ENCODE measurements at regions of chr11 and their contacts with region 1.

Region 1: GRCh38 chr11:59053387-59053786 is 32.7 kb upstream of the GLYATL1B start:
- DNase-seq: peak; percentile 25
- H3K4me3 ChIP-seq: no peak overlapping the region
- H3K27ac ChIP-seq: no peak overlapping the region
- H3K4me1 ChIP-seq: no peaks in the 10 kb centered on the region
- H3K27me3 ChIP-seq: peaks cover 4% of the 10 kb centered on the region
- CTCF ChIP-seq: peak; percentile 66 to 73

Region 2: DNA sequence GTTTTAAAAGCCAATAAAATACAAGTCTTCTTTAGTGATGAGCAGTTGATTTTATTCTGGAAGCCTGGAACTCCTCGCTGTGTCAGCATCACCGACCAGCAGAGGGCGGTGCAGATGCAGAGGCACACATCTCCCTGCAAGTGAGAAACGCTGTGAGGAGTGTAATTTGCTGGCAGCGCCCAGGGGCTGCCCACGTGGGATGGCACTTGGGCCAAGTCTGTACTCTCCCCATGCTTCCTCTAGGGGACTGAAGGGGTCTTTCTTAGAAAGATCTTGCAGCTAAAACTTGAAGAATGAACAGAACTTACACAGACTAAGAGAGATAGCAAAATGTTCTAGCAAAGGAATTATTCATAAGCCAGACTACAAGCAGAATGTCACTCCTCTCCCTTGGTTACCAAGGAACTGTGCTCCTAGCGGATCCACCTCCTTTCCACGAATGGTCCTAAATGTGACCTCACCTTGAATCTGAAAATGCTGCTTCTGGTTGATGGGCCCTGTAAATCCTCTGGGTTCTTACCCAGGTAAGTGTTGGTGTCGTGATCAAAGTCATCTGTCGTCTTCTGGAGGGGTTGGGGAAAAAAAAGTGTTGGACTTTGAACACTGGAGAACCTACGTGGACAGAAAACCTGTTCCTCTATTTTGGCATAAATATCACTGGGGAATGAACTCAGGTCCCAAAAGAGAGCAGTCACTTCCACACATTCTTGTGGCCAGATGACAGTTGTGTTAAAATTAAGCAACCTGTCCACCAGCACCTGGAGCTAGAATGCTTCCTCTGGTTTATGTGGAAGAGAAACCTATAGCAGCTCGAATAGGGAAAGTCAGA is 399.1 kb before region 1 on chr11:
- CTCF ChIA-PET with region 1: interaction called, 5 read pairs
- dilution Hi-C with region 1: no loop called
- in situ Hi-C with region 1: no loop called
- intact Hi-C with region 1: loop called (anchors 1 kb)
- DNase-seq: peak; percentile 60
- H3K4me3 ChIP-seq: no peak overlapping the region
- H3K27ac ChIP-seq: no peak overlapping the region
- H3K4me1 ChIP-seq: peaks cover 16% of the 10 kb centered on the region
- H3K27me3 ChIP-seq: no peaks in the 10 kb centered on the region
- CTCF ChIP-seq: peak; percentile 91 to 97

Region 3: GRCh38 chr11:58905721-58906477 is 147.5 kb before region 1 on chr11:
- CTCF ChIA-PET with region 1: interaction called, 16 read pairs
- dilution Hi-C with region 1: no loop called
- in situ Hi-C with region 1: no loop called
- intact Hi-C with region 1: loop called (anchors 1 kb)
- DNase-seq: peak; percentile 93
- H3K4me3 ChIP-seq: peak overlapping the region in 2 of 3 experiments; percentile 66 to 81
- H3K27ac ChIP-seq: no peak overlapping the region
- H3K4me1 ChIP-seq: peaks cover 23% of the 10 kb centered on the region
- H3K27me3 ChIP-seq: no peaks in the 10 kb centered on the region
- CTCF ChIP-seq: peak; percentile 35 to 54

Region 4: GRCh38 chr11:58958500-58958899 is 94.9 kb before region 1 on chr11:
- CTCF ChIA-PET with region 1: interaction called, 4 read pairs
- dilution Hi-C with region 1: no loop called
- in situ Hi-C with region 1: no loop called
- intact Hi-C with region 1: loop called (anchors 1 kb)
- DNase-seq: no peak
- H3K4me3 ChIP-seq: no peak overlapping the region
- H3K27ac ChIP-seq: no peak overlapping the region
- H3K4me1 ChIP-seq: no peaks in the 10 kb centered on the region
- H3K27me3 ChIP-seq: peaks cover 3% of the 10 kb centered on the region
- CTCF ChIP-seq: peak; percentile 35 to 52

Region 5: DNA sequence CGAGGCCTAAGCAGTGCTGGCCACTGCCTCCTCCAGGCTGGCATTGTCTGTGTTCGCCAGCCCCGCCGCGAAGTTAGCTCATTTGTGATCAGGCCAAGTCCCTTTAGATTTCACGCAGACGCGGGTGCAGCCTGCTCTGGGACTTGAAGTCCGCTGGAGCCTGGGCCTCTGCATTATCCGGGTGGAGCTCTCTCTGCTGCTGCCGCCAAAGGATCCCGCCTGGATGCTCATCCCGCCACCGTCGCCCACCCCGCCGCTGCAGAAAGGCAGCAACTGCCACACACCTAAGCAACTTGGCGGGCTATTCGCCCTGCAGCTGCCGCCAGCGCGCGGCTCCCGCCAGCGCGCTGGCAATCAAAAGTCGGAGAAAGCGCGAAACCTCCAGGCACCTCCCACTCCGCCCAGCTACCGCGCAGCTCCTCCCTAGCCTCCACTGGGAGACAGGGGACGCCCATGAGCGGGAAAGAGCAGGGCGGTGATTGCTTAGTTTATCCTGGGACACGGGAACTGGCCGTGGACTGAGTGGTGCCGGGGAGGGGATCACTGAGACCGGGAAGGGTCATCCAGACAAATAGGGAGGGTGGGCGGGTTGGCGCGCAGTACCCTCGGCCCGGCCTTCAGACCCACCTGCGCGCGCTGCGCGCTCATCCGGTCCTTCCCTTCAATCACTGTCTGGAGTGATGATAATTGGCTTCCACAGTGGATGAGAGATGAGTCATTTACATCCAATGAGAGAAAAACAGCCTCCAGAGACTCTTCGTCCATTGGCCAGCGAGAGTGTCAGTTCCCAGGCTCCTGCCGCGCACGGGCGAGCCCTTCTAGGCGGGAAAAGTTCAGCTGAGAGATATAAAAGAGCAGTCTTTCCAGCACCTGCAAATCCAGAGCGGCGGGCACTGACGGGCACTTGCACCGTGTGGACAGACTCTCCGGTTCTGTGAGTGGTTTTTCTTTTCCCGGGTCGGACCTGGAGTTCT is 53.3 kb after region 1 on chr11 and contains the start of gene FAM111B:
- CTCF ChIA-PET with region 1: no interaction called
- dilution Hi-C with region 1: no loop called
- in situ Hi-C with region 1: no loop called
- intact Hi-C with region 1: loop called (anchors 1 kb)
- DNase-seq: peak; percentile 97
- H3K4me3 ChIP-seq: peak within 1 kb of the TSS; percentile 55 to 60 (median 60)
- H3K27ac ChIP-seq: peak within 1 kb of the TSS; percentile 5
- H3K4me1 ChIP-seq: peaks cover 9% of the 10 kb centered on the region
- H3K27me3 ChIP-seq: no peaks in the 10 kb centered on the region
- CTCF ChIP-seq: peak in 1 of 2 donors; percentile 29
- total RNA-seq, gene FAM111B: 3.2 to 19.3 TPM

Region 6: GRCh38 chr11:59135648-59136461 is 82.5 kb after region 1 on chr11:
- CTCF ChIA-PET with region 1: no interaction called
- dilution Hi-C with region 1: no loop called
- in situ Hi-C with region 1: no loop called
- intact Hi-C with region 1: loop called (anchors 1 kb)
- DNase-seq: peak; percentile 36
- H3K4me3 ChIP-seq: no peak overlapping the region
- H3K27ac ChIP-seq: no peak overlapping the region
- H3K4me1 ChIP-seq: peaks cover 6% of the 10 kb centered on the region
- H3K27me3 ChIP-seq: no peaks in the 10 kb centered on the region
- CTCF ChIP-seq: peak; percentile 99 to 100

Region 7: DNA sequence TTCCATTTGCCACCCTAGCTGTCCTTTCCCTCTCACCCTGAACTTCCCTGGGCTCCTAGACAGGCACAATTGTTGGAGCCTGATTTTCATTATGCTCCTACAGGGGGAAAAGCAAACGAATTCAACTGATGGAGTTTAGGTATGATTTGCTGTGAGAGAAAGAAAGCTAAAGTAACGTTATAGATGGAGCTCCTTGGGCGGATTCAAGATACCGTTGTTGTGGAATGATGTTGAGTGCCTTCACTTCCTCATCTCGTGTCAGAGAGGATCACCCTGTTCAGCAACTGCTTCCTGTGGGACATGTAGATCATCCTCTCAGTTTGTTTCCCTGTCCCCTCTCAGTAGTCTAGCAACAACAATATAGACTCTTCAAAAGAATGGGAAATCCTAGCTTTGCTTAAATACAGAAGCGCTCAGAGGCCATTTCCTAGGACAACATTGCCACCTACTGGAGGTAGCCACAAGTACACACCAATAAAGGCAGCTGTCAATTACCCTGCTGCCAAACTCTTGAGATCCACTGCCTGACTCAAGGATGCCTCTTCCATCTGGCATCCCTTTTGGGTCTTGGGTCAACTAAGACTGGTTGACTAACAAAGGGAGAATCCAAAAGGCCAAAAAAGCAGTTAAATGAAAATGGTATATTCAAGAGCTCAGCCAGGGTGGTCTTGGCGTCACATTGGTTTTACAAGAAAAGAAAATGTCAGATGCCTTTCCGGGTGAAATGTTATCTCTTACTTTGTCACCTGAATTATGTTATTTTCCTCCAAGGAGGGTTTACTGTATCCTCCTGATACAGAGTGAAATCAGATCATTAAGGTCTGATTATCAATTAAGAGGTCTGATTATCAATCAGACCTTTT is 105.0 kb after region 1 on chr11:
- CTCF ChIA-PET with region 1: no interaction called
- dilution Hi-C with region 1: no loop called
- in situ Hi-C with region 1: no loop called
- intact Hi-C with region 1: loop called (anchors 1 kb)
- DNase-seq: peak; percentile 52
- H3K4me3 ChIP-seq: no peak overlapping the region
- H3K27ac ChIP-seq: no peak overlapping the region
- H3K4me1 ChIP-seq: no peaks in the 10 kb centered on the region
- H3K27me3 ChIP-seq: no peaks in the 10 kb centered on the region
- CTCF ChIP-seq: peak; percentile 83 to 86